Pancreas (tissue), 10 donors: ENCODE measurements at regions of chr1 and their contacts with region 1.

Region 1: GRCh38 chr1:15028102-15028501 is 125.4 kb upstream of the TMEM51 start:
- DNase-seq: peak in 1 of 6 donors; percentile 25
- ATAC-seq: peak in 3 of 4 donors; percentile 30 to 48 (median 30)
- H3K4me3 ChIP-seq: no peak overlapping the region
- H3K27ac ChIP-seq: no peak overlapping the region
- H3K4me1 ChIP-seq: no peaks in the 10 kb centered on the region
- H3K27me3 ChIP-seq: no peaks in the 10 kb centered on the region
- CTCF ChIP-seq: no peak

Region 2: DNA sequence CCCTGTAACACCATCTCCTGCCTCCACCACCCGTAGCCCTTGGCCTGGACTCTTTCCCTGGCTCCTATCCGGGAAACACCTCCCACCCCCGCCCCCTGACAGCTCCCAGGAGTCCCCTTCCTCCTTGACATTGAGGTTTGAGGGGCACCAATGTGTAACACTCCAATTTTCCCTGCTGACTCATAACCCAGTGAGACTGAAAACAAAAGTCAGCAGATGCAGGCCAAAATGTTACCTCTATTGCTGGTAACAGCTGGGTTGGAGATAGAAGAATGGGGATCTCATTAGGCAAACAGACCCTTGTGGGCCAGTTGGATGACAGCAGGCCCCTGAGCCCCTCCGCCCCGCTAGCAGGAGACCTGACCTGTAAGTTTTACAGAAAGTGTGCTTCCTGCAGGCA is 192.4 kb before region 1 on chr1:
- intact Hi-C with region 1: loop called in 1 of 3 experiments (anchors 10 kb)
- DNase-seq: no peak
- ATAC-seq: no peak
- H3K4me3 ChIP-seq: no peak overlapping the region
- H3K27ac ChIP-seq: no peak overlapping the region
- H3K4me1 ChIP-seq: no peaks in the 10 kb centered on the region
- H3K27me3 ChIP-seq: no peaks in the 10 kb centered on the region
- CTCF ChIP-seq: no peak

Region 3: DNA sequence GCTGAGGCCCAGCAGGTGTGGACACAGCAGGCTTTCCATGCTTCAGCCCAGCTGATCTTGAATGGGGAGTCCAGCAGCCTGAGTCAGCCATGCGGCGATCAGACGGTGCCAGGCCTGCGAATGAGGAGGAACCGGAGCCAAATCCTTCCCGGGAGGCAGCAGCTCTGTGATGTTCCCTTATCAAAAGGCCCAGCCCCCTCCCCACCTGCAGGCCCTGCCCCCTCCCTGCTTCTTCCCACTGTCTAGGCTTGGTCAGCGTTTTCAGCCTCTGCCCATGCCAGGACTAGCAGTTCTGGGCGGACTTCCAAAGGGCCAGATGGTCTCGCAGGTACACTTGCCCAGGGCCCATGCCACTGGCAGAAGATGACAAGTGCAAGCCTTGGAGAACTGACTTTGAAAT is 175.8 kb before region 1 on chr1:
- intact Hi-C with region 1: no loop called
- DNase-seq: peak; percentile 89 to 99 (median 98)
- ATAC-seq: peak; percentile 90 to 95 (median 94)
- H3K4me3 ChIP-seq: no peak overlapping the region
- H3K27ac ChIP-seq: peak overlapping the region; percentile 28 to 61 (median 42)
- H3K4me1 ChIP-seq: peaks cover 10 to 27% (median 15%) of the 10 kb centered on the region in 3 donors
- H3K27me3 ChIP-seq: no peaks in the 10 kb centered on the region
- CTCF ChIP-seq: no peak

Region 4: DNA sequence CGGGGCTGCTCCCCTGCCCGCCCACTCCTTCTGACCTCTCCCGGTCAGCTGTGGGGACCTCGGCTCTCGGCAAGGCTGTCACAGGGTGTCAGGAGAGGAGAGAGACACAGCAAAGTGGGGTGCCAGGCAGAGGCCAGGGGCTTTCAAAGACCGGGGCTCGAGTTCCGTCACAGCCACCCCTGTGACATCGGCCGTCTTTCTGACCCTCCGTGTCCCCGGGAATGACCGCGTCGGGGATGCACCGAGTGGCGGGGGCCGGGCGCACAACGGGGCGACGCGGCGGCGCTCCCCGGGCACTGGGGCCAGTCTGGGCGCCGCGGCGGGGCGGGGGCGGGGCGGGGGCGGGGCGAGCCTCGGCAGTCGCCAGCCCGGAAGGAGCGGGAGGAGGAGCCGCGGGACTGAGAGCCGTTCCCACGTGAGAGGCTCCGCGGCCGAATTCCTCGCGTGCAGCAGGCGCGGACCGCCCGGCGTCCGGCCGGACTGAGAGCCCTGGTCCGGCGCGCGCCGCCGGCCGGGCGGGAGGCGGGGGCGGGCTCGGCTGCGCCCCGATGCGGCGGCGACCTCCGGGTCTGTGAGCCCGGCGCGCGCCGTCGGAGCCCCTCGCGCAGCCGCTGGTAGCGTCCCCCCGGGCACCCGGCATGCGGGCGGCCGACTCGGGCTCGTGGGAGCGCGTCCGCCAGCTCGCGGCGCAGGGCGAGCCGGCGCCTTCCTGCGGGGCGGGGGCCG is 104.2 kb before region 1 on chr1:
- intact Hi-C with region 1: loop called in 1 of 3 experiments (anchors 5 kb)
- DNase-seq: peak; percentile 63 to 85 (median 74)
- ATAC-seq: peak; percentile 78 to 86 (median 82)
- H3K4me3 ChIP-seq: peak overlapping the region in 3 of 4 donors; percentile 53 to 75 (median 70)
- H3K27ac ChIP-seq: no peak overlapping the region
- H3K4me1 ChIP-seq: peaks cover 0 to 2% (median 0%) of the 10 kb centered on the region in 3 donors
- H3K27me3 ChIP-seq: no peaks in the 10 kb centered on the region
- CTCF ChIP-seq: no peak

Region 5: GRCh38 chr1:15089258-15089992 is 61.3 kb after region 1 on chr1:
- intact Hi-C with region 1: loop called in 1 of 3 experiments (anchors 10 kb)
- DNase-seq: peak in 1 of 6 donors; percentile 37
- ATAC-seq: peak; percentile 36 to 64 (median 44)
- H3K4me3 ChIP-seq: no peak overlapping the region
- H3K27ac ChIP-seq: peak overlapping the region; percentile 52 to 67 (median 66)
- H3K4me1 ChIP-seq: peaks cover 7 to 12% (median 9%) of the 10 kb centered on the region in 3 donors
- H3K27me3 ChIP-seq: no peaks in the 10 kb centered on the region
- CTCF ChIP-seq: no peak

Region 6: GRCh38 chr1:15218287-15219279 is 190.5 kb after region 1 on chr1:
- intact Hi-C with region 1: no loop called
- DNase-seq: peak in 1 of 6 donors; percentile 31
- ATAC-seq: peak; percentile 29 to 62 (median 38)
- H3K4me3 ChIP-seq: no peak overlapping the region
- H3K27ac ChIP-seq: peak overlapping the region in 1 of 4 donors; percentile 8
- H3K4me1 ChIP-seq: peaks cover 0 to 16% (median 9%) of the 10 kb centered on the region in 3 donors
- H3K27me3 ChIP-seq: no peaks in the 10 kb centered on the region
- CTCF ChIP-seq: no peak